Activated naive CD8-positive, alpha-beta T cell treated with anti-CD3 and anti-CD28 coated beads, Interleukin-2, amount 10 ng/mL, durations not matched to agents 7 days and 5 days (primary cell): ENCODE measurements at regions of chr3 and their contacts with region 1.

Region 1: GRCh38 chr3:46926871-46927717 is 49.5 kb downstream of the CCDC12 start:
- DNase-seq: no peak
- ATAC-seq: peak; percentile 77
- H3K4me3 Mint-ChIP-seq: peak overlapping the region; percentile 61
- H3K27ac Mint-ChIP-seq: peak overlapping the region; percentile 90
- H3K4me1 Mint-ChIP-seq: peaks cover 58% of the 10 kb centered on the region
- H3K27me3 Mint-ChIP-seq: no peaks in the 10 kb centered on the region

Region 2: GRCh38 chr3:46947981-46948791 is 21.1 kb after region 1 on chr3:
- POLR2A ChIA-PET with region 1: interaction called, 13 read pairs
- DNase-seq: peak; percentile 54
- ATAC-seq: peak; percentile 77
- H3K4me3 Mint-ChIP-seq: peak overlapping the region; percentile 47
- H3K27ac Mint-ChIP-seq: peak overlapping the region; percentile 69
- H3K4me1 Mint-ChIP-seq: peaks cover 63% of the 10 kb centered on the region
- H3K27me3 Mint-ChIP-seq: no peaks in the 10 kb centered on the region

Region 3: DNA sequence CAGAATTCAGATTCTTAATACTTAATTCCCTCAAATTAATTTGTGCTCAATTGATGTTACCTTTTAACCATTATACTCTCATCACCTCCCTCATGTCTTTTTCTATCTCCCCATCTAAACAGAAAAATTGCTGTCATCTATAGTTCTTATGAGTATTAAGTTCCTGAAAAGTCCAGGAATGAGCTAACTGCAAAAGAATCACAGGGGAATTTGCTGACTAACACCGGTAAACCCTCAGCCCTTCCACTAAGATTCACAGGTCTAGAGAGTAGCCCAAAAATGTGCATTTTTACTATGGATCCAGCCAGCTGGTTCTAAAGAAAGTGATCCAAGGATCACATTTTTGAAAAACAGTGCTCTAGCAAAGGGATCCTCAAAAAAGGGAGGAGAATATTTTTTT is 169.9 kb after region 1 on chr3:
- POLR2A ChIA-PET with region 1: no interaction called
- DNase-seq: no peak
- ATAC-seq: no peak
- H3K4me3 Mint-ChIP-seq: no peak overlapping the region
- H3K27ac Mint-ChIP-seq: no peak overlapping the region
- H3K4me1 Mint-ChIP-seq: peaks cover 2% of the 10 kb centered on the region
- H3K27me3 Mint-ChIP-seq: no peaks in the 10 kb centered on the region